ENCODE measurements at regions of chr14 and their contacts with region 1.

Region 1: DNA sequence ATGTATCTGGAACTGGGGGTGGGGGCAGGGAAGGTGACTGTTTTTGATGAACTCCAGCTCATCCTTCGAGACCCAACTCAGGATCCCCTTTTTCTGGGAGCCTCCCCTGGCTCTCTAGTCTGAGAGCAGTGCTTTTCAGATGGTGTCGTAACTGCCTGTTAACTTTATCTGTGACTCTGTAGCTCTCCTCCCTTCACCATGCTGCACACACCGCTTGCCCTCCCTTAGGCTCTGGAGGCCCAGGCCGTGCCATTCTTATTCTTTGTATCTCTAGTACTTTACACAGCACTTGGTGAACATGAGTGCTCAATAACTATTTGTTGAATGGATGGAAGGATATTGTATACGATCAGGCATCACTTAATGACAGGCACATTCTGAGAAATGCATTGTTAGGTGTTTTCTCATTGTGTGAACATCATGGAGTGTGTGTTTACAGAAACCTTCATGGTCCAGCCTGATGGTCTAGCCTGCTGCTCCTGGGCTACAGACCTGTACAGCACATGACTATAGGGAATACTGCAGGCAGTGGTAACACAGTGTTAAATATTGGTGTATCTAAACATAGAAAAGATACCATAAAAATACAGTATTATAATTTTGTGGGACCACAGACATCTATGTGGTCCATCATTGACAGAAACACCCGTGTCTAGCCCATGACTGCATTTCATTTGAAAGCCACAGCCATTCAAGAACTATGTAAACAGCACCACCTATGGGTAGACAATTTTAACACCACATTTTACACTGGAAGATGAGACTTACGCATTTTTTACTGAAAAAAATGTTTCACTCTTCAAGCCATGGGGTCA is 91.8 kb downstream of the EML1 start:
- DNase-seq: peak in 1 of 2 donors; percentile 50
- ATAC-seq: peak; percentile 54 to 82 (median 70)
- H3K4me3 ChIP-seq: no peak overlapping the region
- H3K27ac ChIP-seq: no peak overlapping the region
- H3K4me1 ChIP-seq: peaks cover 0 to 5% (median 0%) of the 10 kb centered on the region in 9 donors
- H3K27me3 ChIP-seq: no peaks in the 10 kb centered on the region
- CTCF ChIP-seq: peak; percentile 61 to 90 (median 78)

Region 2: DNA sequence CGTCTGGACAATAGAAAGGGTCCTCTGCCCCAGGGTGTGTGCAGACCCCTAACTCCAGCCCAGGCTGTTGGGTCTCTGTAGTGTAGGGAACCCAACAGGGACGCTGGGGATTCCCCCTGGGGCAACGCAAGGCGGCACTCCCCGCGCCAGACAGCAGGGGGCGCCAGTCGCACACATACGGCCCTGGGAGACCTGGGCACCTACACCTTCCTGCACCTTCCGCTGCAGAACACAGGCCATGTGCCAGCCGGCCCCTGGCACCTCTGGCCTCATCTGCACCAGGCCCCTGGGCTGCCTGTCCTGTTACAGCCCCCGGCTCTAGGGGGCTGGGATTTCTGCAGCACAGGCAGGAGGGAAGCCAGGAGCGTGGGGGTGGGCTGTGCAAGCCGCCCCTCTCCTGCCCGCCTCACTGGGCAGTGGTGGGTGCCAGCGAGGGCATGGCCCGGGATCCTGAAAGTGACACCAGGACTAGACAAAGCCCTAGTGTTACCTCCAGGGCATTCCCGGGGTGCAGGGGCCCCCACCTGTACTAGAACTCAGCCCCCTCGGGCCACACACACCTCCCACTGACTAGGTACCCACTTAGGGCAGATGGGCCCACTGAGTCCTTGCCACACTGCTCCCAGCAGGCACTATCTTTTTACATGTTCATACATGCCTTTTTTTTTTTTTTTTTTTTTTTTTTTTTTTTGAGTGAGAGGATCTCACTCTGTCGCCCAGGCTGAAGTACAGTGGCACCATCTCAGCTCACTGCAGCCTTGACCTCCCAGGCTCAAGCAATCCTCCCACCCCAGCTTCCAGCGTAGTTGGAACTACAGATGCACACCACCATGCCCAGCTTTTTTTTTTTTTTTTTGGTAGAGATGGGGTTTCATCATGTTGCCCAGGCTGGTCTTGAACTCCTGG is 366.3 kb before region 1 on chr14:
- intact Hi-C with region 1: loop called in 3 of 10 experiments (anchors 10 kb)
- DNase-seq: peak; percentile 59 to 82
- ATAC-seq: peak; percentile 46 to 76 (median 63)
- H3K4me3 ChIP-seq: no peak overlapping the region
- H3K27ac ChIP-seq: no peak overlapping the region
- H3K4me1 ChIP-seq: peaks cover 3 to 35% (median 24%) of the 10 kb centered on the region in 9 donors
- H3K27me3 ChIP-seq: no peaks in the 10 kb centered on the region
- CTCF ChIP-seq: peak; percentile 95 to 99 (median 97)

Region 3: GRCh38 chr14:99524804-99525698 is 360.0 kb before region 1 on chr14:
- intact Hi-C with region 1: loop called in 1 of 10 experiments (anchors 10 kb)
- DNase-seq: no peak
- ATAC-seq: peak in 7 of 8 donors; percentile 48 to 67 (median 58)
- H3K4me3 ChIP-seq: no peak overlapping the region
- H3K27ac ChIP-seq: peak overlapping the region; percentile 29 to 79 (median 59)
- H3K4me1 ChIP-seq: peaks cover 8 to 61% (median 46%) of the 10 kb centered on the region in 9 donors
- H3K27me3 ChIP-seq: no peaks in the 10 kb centered on the region
- CTCF ChIP-seq: peak in 8 of 9 donors; percentile 8 to 55 (median 34)

Region 4: DNA sequence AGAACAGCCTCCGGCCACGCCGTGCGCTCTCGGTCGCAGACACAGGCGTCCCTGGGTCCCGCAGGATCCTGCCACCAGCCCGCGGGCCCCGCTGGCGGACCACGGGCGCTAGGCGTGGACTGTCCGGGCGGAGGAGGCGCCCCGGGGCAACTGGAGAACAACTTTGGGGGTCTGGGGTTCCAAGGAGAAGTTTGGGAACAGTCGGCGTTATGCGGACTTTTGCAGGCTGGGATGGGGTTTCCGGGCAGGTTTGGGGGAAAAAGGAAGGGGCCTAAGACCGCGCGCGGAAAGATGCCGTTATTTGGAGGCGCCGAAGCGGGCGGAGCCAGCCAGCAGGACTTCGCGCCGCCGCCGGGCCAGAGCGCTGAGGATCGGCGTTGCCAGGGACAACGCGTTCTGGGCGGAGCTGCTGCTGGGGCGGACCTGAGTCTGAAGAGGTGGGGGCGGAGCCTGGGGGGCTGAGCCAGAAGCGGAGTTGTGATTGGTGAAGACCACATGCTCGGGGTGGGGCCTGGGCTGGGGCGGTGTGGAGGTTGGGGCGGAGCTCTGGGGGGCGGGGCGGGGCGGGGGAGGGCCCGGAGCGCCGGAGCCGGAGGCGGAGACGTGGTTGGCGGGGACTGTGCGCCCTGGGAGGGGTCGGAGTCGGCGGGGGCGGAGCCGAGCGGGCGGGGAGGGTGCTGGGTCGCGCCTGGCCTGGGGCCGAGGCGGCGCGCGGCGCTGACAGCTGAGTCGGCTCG is 201.3 kb before region 1 on chr14 and contains the start of gene CYP46A1:
- intact Hi-C with region 1: loop called (anchors 1 to 5 kb)
- DNase-seq: peak; percentile 100
- ATAC-seq: peak; percentile 97 to 99 (median 98)
- H3K4me3 ChIP-seq: peak within 1 kb of the TSS; percentile 51 to 99 (median 87)
- H3K27ac ChIP-seq: peak within 1 kb of the TSS in 9 of 10 donors; percentile 71 to 94 (median 80)
- H3K4me1 ChIP-seq: peaks cover 9 to 25% (median 15%) of the 10 kb centered on the region in 9 donors
- H3K27me3 ChIP-seq: peaks cover 0 to 25% (median 0%) of the 10 kb centered on the region in 7 donors
- CTCF ChIP-seq: no peak
- total RNA-seq, gene CYP46A1: 2.0 to 6.1 (median 3.9) TPM

Region 5: DNA sequence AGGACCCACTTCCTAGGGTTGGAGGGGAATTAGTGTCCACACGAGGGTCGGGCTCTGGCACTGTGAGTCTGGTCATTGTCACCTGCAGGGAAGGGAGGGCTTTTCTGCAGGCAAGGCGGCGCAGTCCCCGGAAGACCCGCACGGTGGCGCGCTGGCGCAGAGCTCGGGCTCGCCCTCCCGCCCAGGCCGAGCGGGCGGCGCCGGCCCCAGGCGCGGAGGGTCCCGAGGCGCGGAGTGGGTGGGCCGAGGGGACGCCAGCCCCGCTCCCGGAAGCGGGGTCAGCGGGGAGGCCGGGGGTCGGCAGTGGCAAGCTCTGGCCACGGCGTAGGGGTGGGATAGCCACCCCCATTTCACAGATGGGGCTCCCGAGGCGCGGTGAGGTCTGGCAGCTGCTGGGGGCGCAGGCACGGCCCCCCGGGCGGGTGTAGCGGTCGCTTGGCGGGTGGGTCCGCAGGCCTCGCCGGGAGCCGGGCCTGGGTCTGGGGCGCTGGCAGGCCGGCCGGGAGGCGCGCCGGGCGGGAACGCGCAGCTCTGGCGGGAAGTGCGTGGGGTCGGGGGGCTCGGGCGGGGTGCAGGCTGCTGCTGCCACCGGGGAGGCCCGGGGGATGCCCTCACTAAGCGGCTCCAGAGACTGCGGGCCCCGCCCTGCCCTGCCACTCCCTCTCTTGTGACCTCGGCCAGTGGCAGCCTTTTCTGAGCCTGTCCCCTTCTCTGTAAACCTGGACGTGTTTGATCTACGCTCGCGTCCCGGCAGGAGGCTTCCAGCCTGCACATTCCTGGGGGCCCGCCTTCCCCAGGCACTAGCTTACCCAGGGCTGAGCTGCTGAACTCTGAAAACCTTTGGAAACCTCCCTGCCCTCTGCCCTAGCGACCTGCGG is 154.8 kb before region 1 on chr14:
- intact Hi-C with region 1: loop called (anchors 1 to 2 kb)
- DNase-seq: peak; percentile 71 to 80
- ATAC-seq: peak; percentile 45 to 72 (median 60)
- H3K4me3 ChIP-seq: peak overlapping the region; percentile 37 to 66 (median 58)
- H3K27ac ChIP-seq: peak overlapping the region in 5 of 10 donors; percentile 35 to 76 (median 53)
- H3K4me1 ChIP-seq: peaks cover 12 to 57% (median 47%) of the 10 kb centered on the region in 9 donors
- H3K27me3 ChIP-seq: peaks cover 0 to 17% (median 0%) of the 10 kb centered on the region in 7 donors
- CTCF ChIP-seq: peak; percentile 86 to 97 (median 91)

Region 6: GRCh38 chr14:99862136-99862535 is 22.9 kb before region 1 on chr14:
- intact Hi-C with region 1: no loop called
- DNase-seq: no peak
- ATAC-seq: no peak
- H3K4me3 ChIP-seq: no peak overlapping the region
- H3K27ac ChIP-seq: no peak overlapping the region
- H3K4me1 ChIP-seq: peaks cover 0 to 4% (median 0%) of the 10 kb centered on the region in 9 donors
- H3K27me3 ChIP-seq: no peaks in the 10 kb centered on the region
- CTCF ChIP-seq: no peak

Region 7: DNA sequence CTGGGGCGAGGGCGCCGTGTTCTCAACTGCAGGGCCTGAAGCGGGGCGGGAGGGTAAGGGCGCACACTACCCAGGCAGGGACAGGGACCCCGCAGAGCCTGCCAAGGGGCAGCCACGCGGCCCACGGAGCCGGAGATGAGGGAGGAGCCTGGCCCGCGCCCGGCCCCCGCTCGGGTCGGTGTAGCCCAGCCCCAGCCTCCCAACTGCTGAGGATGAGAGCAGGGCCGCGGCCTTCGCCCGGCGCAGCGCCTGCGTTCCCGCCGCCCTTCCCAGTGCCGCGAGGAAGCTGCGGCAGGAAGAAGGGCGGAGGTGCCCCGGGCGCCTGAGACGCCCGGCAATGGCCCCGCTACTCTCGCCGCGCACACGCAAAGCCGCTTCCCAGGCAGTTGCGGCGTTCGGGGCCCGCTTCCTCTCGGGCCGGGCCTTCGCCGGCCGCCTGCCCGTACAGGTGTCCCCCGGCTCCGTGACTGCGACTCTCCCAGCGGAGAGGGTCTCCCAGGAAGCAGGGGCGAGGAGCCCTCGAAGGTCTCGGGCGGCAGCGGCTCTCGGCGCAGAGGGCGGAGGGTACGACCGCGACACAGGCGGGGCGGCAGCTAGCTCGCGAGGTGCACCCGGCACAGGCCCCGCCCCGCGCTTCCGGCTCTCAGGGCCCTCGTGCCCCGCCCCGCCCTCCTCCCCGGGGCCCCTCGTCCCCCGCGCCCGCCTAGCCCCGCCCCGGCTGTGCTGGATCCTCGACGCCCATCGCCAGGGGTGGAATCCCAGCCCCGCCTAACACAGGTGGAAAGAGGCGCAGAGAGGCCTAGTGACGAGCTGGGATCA is 329.1 kb after region 1 on chr14:
- intact Hi-C with region 1: no loop called
- DNase-seq: peak; percentile 84 to 92
- ATAC-seq: peak; percentile 95 to 98 (median 97)
- H3K4me3 ChIP-seq: peak overlapping the region; percentile 52 to 91 (median 74)
- H3K27ac ChIP-seq: peak overlapping the region; percentile 57 to 98 (median 92)
- H3K4me1 ChIP-seq: peaks cover 0 to 19% (median 9%) of the 10 kb centered on the region in 9 donors
- H3K27me3 ChIP-seq: no peaks in the 10 kb centered on the region
- CTCF ChIP-seq: peak in 1 of 9 donors; percentile 7

Measured in heart right ventricle (tissue), 16 donors.